ENCODE measurements at regions of chr3 and their contacts with region 1.

Region 1: DNA sequence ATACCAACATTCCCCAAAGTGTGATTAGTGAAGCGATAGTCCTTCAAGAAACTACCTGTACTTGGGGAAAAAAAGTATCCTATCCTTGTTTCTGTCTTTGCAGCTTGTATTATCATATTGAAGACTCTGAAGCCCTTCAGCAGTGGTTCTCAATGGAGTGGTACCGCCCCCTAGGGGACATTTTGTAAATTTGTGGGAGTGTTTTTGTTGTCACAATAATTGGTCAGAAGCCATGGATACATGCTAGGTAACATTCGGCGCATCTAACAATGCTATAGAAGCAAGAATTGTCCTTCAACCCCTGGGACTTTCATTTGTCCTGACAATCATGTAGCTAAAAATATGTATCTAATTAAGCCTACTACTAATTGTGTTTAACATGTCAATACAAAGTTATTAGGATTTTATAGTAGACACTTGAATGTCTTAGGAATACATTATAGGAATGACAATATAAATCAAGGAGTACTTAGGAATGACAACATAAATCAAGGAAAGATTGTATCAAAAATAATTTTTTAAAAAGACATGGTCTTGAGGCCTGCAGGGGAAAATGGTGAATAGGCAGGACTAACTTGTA is 53.7 kb downstream of the NMD3 start:
- DNase-seq: no peak
- ATAC-seq: no peak

Region 2: DNA sequence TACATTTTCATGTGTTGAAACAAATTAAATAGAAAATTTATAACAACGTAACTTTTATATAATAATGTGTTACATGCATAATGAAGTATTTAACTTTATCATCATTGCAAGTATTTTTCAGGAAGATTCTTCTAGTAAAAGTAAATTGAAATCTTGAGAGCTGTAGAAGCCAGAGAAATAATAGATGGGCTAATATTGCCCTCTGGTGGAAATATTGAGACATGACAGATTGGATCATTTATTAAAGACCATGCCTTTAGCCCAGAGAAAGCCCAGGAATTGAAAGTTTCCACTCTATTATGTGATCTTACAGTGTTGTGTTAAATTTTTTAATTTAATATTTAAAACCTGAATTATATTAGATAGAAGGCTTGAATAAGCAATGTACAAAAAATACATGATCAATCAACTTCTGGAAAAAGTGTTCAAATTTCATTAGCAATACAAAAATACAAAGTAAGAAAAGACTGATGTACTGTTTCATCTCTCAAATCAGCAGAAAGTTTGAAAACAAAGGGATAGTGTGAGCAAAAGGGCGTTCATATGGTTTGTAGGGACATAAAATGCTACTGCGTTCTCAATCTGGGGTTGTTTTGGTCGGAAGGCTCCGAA is 149.2 kb after region 1 on chr3:
- intact Hi-C with region 1: loop called (anchors 2 kb)
- DNase-seq: no peak
- ATAC-seq: no peak